CD4-positive, alpha-beta memory T cell (primary cell): ENCODE measurements at regions of chr17 and their contacts with region 1.

Region 1: DNA sequence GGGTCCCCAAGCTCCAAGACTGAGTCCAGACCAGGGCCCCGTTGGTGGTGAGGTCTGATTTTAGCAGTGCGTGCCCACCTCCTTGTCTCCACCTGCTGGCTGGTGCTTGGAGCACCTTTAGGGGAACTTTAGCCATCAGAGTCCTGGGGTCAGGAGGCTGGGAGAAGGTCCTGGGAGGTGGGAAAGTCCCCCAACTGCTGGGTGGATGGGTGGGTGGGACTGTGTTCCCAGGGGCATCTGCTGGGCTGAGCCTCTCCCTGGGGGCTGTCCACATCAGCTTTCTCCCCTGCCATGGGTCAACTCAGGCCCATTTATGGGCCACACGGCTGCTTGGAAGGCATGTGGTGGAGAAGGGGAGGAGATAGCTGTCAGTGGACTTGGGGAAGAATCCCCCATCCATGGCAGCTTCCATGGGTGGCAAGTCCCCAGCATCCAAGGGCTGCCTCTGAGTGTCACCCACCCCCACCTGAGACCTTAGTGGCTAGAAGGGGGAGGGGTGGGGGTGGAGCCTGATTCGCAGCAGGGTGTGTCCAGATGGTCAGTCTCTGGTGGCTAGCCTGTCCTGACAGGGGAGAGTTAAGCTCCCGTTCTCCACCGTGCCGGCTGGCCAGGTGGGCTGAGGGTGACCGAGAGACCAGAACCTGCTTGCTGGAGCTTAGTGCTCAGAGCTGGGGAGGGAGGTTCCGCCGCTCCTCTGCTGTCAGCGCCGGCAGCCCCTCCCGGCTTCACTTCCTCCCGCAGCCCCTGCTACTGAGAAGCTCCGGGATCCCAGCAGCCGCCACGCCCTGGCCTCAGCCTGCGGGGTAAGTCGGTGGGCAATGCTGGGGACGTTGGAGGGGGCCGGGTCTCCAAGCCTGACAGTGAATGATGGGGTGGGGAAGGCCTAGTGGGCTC is at the start of gene TRPV2:
- DNase-seq: peak; percentile 40 to 52 (median 42)
- H3K4me3 ChIP-seq: peak within 1 kb of the TSS; percentile 47 to 79
- H3K4me3 Mint-ChIP-seq: peak within 1 kb of the TSS; percentile 91 to 99 (median 97)
- H3K27ac ChIP-seq: peak within 1 kb of the TSS; percentile 92
- H3K27ac Mint-ChIP-seq: peak within 1 kb of the TSS; percentile 97 to 100 (median 99)
- H3K4me1 ChIP-seq: peaks cover 51% of the 10 kb centered on the region
- H3K4me1 Mint-ChIP-seq: peaks cover 26 to 65% (median 43%) of the 10 kb centered on the region in 4 donors
- H3K27me3 ChIP-seq: no peaks in the 10 kb centered on the region
- H3K27me3 Mint-ChIP-seq: no peaks in the 10 kb centered on the region
- total RNA-seq, gene TRPV2: 95.0 to 101 TPM

Region 2: DNA sequence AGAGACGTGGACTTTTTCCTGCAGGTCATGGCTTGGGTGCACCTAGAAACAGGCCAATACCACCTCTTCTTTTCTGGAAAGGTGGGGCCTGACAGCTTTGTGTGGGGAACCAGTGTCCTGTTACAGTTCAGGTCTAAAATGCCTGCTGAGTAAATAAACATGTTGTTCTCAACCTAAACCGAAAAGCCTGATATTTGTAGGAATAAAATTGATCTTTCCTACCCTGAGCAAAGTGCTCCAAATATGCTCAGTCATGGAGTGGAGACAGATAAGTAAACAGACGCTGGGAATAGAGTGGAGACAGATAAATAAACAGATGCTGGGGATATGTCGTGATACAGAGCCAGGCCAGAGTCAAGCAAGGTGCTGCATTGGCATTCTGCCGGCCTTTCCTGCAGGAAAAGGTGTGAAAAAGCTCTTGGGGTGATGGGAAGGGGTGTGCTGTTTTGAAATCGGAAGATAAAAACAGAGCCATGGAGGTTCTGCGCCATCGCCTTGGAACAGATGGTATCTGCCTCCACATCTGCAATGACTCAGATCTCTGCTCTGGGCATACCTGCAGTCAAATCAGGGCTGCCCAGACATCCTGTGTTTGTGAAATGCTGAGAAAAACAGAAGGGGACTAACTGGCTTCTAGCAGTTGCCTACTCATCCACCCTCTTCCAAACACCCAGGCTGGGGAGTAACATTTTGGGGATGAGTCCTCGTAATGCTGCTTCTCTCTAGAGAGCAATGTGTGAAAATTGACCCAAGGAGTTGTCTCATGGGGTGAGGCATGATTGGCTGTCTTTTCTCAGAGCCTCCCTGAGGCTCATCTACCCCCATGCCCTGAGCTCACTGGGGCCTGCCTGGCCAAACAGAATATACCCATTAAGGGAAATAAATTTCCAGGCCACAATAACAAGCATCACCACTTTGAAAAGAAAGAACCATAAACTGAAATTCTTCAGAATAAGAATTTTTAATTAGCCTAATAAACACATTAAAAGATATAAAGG is 16.7 kb before region 1 on chr17:
- CTCF ChIA-PET with region 1: interaction called, 11 read pairs
- POLR2A ChIA-PET with region 1: interaction called, 4 read pairs
- intact Hi-C with region 1: no loop called
- DNase-seq: no peak
- H3K4me3 ChIP-seq: no peak overlapping the region
- H3K4me3 Mint-ChIP-seq: no peak overlapping the region
- H3K27ac ChIP-seq: no peak overlapping the region
- H3K27ac Mint-ChIP-seq: peak overlapping the region in 2 of 7 donors; percentile 35 to 55
- H3K4me1 ChIP-seq: no peaks in the 10 kb centered on the region
- H3K4me1 Mint-ChIP-seq: peaks cover 4 to 8% (median 6%) of the 10 kb centered on the region in 4 donors
- H3K27me3 ChIP-seq: no peaks in the 10 kb centered on the region
- H3K27me3 Mint-ChIP-seq: peaks cover 0 to 3% of the 10 kb centered on the region in 2 donors

Region 3: DNA sequence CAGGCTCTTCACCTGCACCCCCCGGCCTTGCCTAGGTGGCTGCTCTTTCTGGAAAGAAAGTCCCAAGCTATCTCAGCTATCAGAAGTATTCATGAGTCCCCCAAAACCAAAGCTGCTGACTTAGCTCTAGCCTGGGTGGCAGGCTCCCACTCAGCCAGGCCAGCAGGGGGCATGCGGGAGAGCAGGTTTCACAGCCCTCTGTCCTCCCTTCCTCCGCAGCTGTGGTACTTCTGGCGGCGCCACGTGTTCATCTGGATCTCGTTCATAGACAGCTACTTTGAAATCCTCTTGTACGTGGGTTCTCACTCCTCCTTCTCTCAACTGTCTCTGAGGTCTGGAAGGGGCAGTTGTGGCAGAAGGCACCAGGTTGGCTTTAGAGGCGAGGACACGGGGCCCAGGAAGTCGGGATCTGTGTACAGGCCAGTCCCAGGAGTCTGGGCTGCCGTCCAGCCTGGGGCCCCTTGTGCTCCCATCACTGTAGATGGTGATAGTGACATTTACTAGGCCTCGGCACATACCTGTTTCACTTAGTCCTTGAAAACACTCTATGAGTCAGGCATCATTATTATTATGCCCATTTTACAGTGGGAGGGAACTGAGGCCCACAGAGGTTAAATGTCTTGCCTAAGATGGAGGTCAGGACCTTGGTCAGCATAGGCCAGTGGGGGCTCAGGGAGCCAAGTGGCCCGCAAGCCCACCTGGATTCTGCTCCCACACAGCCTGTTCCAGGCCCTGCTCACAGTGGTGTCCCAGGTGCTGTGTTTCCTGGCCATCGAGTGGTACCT is 13.0 kb after region 1 on chr17:
- CTCF ChIA-PET with region 1: interaction called, 13 read pairs
- POLR2A ChIA-PET with region 1: interaction called, 122 read pairs
- intact Hi-C with region 1: no loop called
- DNase-seq: peak in 3 of 5 donors; percentile 15 to 38 (median 24)
- H3K4me3 ChIP-seq: no peak overlapping the region
- H3K4me3 Mint-ChIP-seq: no peak overlapping the region
- H3K27ac ChIP-seq: no peak overlapping the region
- H3K27ac Mint-ChIP-seq: peak overlapping the region in 2 of 7 donors; percentile 15 to 29
- H3K4me1 ChIP-seq: no peaks in the 10 kb centered on the region
- H3K4me1 Mint-ChIP-seq: peaks cover 0 to 7% (median 3%) of the 10 kb centered on the region in 4 donors
- H3K27me3 ChIP-seq: no peaks in the 10 kb centered on the region
- H3K27me3 Mint-ChIP-seq: no peaks in the 10 kb centered on the region

Region 4: DNA sequence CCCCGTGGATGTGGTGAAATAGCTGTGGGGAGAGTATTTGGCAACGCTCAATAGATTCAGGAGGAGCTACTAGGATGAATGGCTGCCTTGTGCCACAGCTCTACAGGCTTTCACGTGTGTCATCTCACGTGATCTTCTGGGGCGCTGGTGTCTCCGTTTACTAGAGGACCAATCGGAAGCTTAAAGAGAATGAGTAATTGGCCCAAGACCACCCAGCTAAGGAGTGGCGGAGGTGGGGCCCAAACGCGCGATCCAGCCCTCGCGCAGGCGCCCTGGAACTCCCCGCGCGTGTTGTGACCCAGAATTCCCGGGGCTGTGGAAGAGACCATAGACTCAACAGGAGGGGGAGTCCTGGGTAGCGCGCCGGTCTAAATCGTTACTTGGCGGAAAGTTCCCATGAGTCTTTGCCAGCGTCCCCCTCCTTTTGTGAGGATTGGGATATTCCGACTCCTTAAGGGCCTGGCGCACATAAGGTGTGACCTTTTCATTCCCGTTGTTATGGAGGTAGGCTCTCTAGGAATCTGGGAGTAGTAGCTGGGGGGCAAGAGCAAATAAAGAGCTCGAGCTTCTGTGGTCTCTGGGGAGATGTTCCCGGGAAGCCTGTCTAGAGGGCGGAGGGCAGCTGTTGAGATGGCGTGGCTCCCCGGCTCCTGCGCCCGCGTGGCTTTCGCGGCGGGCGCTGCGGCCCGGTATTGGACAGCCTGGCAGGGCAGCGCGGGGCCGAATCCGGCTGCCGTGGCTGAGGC is 23.5 kb after region 1 on chr17:
- CTCF ChIA-PET with region 1: interaction called, 35 read pairs
- POLR2A ChIA-PET with region 1: interaction called, 122 read pairs
- intact Hi-C with region 1: loop called (anchors 1 kb)
- DNase-seq: peak; percentile 94 to 97 (median 96)
- H3K4me3 ChIP-seq: peak overlapping the region; percentile 78 to 95
- H3K4me3 Mint-ChIP-seq: peak overlapping the region; percentile 98 to 100 (median 99)
- H3K27ac ChIP-seq: peak overlapping the region; percentile 94
- H3K27ac Mint-ChIP-seq: peak overlapping the region; percentile 96 to 100 (median 99)
- H3K4me1 ChIP-seq: peaks cover 45% of the 10 kb centered on the region
- H3K4me1 Mint-ChIP-seq: peaks cover 32 to 57% (median 43%) of the 10 kb centered on the region in 4 donors
- H3K27me3 ChIP-seq: no peaks in the 10 kb centered on the region
- H3K27me3 Mint-ChIP-seq: no peaks in the 10 kb centered on the region

Region 5: DNA sequence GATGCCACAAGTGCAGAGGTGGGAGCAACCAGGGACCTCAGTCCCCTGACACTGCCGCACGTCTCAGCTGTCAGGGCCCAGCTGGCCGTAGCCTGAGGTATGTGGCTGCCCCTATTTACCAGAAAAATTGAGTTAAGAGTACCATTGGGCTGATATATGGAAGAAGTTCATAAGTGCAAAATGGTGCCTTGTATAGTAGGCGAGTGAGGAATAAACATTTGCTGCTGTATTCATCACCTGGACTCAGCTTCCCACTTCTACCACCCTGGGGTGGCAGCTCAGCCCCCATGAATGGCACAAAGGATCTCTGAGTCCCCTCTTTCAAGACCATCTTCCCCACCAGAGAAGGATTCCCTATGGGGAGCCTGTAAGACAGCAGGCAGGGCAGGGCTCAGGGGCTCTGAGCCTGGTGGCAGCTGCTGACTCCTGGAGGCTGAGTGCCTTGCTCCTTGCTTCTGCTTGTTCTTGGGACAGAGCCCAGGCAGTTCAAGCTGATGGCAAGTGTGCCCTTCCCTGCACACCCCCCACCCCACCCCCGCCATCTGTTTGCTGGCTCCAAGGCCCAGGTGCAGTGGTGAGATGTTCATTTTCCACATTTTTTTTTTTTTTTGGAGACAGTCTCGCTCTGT is 29.1 kb after region 1 on chr17:
- CTCF ChIA-PET with region 1: interaction called, 35 read pairs
- POLR2A ChIA-PET with region 1: interaction called, 122 read pairs
- intact Hi-C with region 1: no loop called
- DNase-seq: peak in 1 of 5 donors; percentile 33
- H3K4me3 ChIP-seq: no peak overlapping the region
- H3K4me3 Mint-ChIP-seq: no peak overlapping the region
- H3K27ac ChIP-seq: no peak overlapping the region
- H3K27ac Mint-ChIP-seq: peak overlapping the region in 5 of 7 donors; percentile 7 to 72 (median 50)
- H3K4me1 ChIP-seq: peaks cover 38% of the 10 kb centered on the region
- H3K4me1 Mint-ChIP-seq: peaks cover 28 to 59% (median 40%) of the 10 kb centered on the region in 4 donors
- H3K27me3 ChIP-seq: no peaks in the 10 kb centered on the region
- H3K27me3 Mint-ChIP-seq: no peaks in the 10 kb centered on the region